PC-9 (cell line): ENCODE measurements at regions of chr18 and their contacts with region 1.

Region 1: GRCh38 chr18:76633588-76634269 is 138.7 kb upstream of the ZNF516 start:
- DNase-seq: no peak
- H3K4me3 ChIP-seq: no peak overlapping the region
- H3K27ac ChIP-seq: no peak overlapping the region
- H3K4me1 ChIP-seq: no peaks in the 10 kb centered on the region
- H3K27me3 ChIP-seq: peaks cover 6% of the 10 kb centered on the region; the same call in 1 of the 2 replicates
- CTCF ChIP-seq: no peak

Region 2: DNA sequence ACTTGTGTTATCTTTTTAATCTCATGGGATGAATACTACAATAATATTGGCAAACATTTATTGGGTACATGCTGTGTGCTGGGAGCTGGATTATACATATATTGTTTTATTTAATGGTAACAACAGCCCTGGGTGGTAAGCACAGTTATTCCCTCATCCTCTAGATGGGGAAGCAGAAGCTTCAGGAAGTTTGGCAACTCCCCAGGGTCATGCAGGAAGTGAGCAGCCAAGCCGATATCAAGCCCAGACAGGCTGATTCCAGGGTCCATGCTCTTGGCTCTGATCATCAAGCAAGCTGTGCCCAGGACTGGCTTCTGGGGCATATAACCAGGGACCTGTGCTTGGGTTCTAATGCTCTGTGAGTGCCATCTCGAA is 294.5 kb before region 1 on chr18:
- CTCF ChIA-PET with region 1: interaction called, 11 read pairs
- POLR2A ChIA-PET with region 1: no interaction called
- intact Hi-C with region 1: no loop called
- DNase-seq: no peak
- H3K4me3 ChIP-seq: no peak overlapping the region
- H3K27ac ChIP-seq: no peak overlapping the region
- H3K4me1 ChIP-seq: no peaks in the 10 kb centered on the region
- H3K27me3 ChIP-seq: peaks cover 54% of the 10 kb centered on the region
- CTCF ChIP-seq: no peak